ENCODE measurements at regions of chr22 and their contacts with region 1.

Region 1: DNA sequence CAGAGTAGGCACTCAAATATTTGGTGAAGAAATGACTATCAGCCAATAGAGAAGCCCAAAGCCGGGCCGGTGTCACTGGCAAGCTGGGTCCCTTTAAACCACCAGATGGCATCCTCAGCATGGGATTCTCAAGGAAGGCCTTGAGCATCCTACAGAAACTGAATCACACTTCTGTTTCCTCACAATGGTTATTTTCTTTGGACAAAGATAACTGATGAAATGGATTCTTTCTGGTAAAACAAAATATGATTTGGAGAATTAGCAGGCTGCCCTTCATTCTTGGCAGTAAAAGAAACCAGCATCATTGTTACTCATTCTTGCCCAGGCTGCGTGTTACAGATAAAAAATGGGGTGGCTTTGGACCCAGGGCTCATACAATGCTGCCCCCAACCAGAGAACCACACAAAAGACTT is 30.3 kb upstream of the ASPHD2 start:
- DNase-seq: peak; percentile 46
- ATAC-seq: no peak

Region 2: GRCh38 chr22:26461188-26461810 is 62.6 kb after region 1 on chr22:
- intact Hi-C with region 1: loop called (anchors 5 kb)
- DNase-seq: peak; percentile 60
- ATAC-seq: peak; percentile 79

Measured in Right ventricle myocardium superior (tissue), 1 donor.